ENCODE measurements at regions of chr18 and their contacts with region 1.

Region 1: GRCh38 chr18:80157708-80158343 is 48.8 kb downstream of the ADNP2 start:
- DNase-seq: peak; percentile 86
- H3K4me3 Mint-ChIP-seq: no peak overlapping the region
- H3K27ac Mint-ChIP-seq: no peak overlapping the region
- H3K4me1 Mint-ChIP-seq: peaks cover 3% of the 10 kb centered on the region
- H3K27me3 Mint-ChIP-seq: peaks cover 21% of the 10 kb centered on the region

Region 2: GRCh38 chr18:79378542-79379250 is 779.1 kb before region 1 on chr18:
- CTCF ChIA-PET with region 1: no interaction called
- intact Hi-C with region 1: loop called (anchors 10 kb)
- DNase-seq: peak; percentile 91
- H3K4me3 Mint-ChIP-seq: no peak overlapping the region
- H3K27ac Mint-ChIP-seq: no peak overlapping the region
- H3K4me1 Mint-ChIP-seq: peaks cover 9% of the 10 kb centered on the region
- H3K27me3 Mint-ChIP-seq: no peaks in the 10 kb centered on the region

Region 3: DNA sequence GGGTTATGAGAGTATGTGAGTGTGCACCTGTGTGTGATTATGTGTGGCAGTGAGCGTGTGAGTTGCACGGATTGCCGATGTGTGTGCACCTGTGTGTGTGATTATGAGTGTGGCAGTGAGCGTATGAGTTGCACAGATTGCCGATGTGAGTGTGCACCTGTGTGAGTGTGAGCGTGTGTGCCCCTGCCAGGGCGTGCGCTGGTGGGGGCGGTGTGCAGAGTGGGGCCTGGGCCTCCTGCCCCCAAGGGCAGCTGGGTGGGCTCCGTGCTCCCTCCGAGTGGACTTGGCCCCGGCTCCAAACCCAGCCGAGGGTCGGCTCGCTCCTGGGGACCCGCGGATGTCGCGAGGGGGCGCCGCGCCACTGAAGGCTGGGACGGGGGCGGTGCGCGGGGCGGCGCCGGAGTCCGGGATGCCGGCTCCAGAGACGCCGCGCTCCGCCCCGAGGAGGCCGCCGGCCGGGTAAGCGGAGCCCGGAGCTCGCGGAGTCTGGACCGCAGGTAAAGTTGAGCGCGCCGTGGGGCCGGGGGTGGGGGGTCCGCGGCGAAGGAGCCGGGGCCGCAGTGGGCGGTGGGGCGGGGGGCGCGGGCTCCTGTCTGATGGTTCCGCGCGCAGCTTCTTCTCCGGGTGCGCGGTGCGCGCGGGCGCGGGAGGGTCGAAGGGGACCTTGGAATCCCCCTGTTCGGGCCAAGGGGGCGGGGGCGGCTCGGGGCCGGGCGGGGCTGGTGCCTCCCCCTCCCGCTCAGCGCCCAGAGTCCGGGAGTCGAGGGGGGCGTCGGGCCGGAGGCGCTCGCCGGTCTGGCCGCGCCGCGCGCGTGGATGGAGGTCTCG is 360.1 kb before region 1 on chr18 and contains the start of gene KCNG2:
- CTCF ChIA-PET with region 1: no interaction called
- intact Hi-C with region 1: loop called (anchors 5 kb)
- DNase-seq: peak; percentile 51
- H3K4me3 Mint-ChIP-seq: peak within 1 kb of the TSS; percentile 43
- H3K27ac Mint-ChIP-seq: no peak within 1 kb of the TSS
- H3K4me1 Mint-ChIP-seq: peaks cover 10% of the 10 kb centered on the region
- H3K27me3 Mint-ChIP-seq: peaks cover 38% of the 10 kb centered on the region
- total RNA-seq, gene KCNG2: not detected

Region 4: GRCh38 chr18:79982734-79983133 is 175.1 kb before region 1 on chr18:
- CTCF ChIA-PET with region 1: no interaction called
- intact Hi-C with region 1: loop called (anchors 2 kb)
- DNase-seq: peak; percentile 62
- H3K4me3 Mint-ChIP-seq: peak overlapping the region; percentile 29
- H3K27ac Mint-ChIP-seq: peak overlapping the region; percentile 71
- H3K4me1 Mint-ChIP-seq: peaks cover 74% of the 10 kb centered on the region
- H3K27me3 Mint-ChIP-seq: no peaks in the 10 kb centered on the region

Region 5: GRCh38 chr18:80147418-80148325 is 10.2 kb before region 1 on chr18:
- CTCF ChIA-PET with region 1: interaction called, 34 read pairs
- intact Hi-C with region 1: no loop called
- DNase-seq: peak; percentile 90
- H3K4me3 Mint-ChIP-seq: peak overlapping the region; percentile 82
- H3K27ac Mint-ChIP-seq: no peak overlapping the region
- H3K4me1 Mint-ChIP-seq: peaks cover 10% of the 10 kb centered on the region
- H3K27me3 Mint-ChIP-seq: peaks cover 24% of the 10 kb centered on the region

Region 6: GRCh38 chr18:80171054-80171872 is 13.4 kb after region 1 on chr18:
- CTCF ChIA-PET with region 1: interaction called, 12 read pairs
- intact Hi-C with region 1: no loop called
- DNase-seq: peak; percentile 67
- H3K4me3 Mint-ChIP-seq: no peak overlapping the region
- H3K27ac Mint-ChIP-seq: no peak overlapping the region
- H3K4me1 Mint-ChIP-seq: peaks cover 6% of the 10 kb centered on the region
- H3K27me3 Mint-ChIP-seq: peaks cover 45% of the 10 kb centered on the region

Region 7: GRCh38 chr18:80253871-80254492 is 96.2 kb after region 1 on chr18:
- CTCF ChIA-PET with region 1: interaction called, 43 read pairs
- intact Hi-C with region 1: loop called (anchors 1 kb)
- DNase-seq: no peak
- H3K4me3 Mint-ChIP-seq: no peak overlapping the region
- H3K27ac Mint-ChIP-seq: no peak overlapping the region
- H3K4me1 Mint-ChIP-seq: no peaks in the 10 kb centered on the region
- H3K27me3 Mint-ChIP-seq: peaks cover 9% of the 10 kb centered on the region